ENCODE measurements at regions of chr4 and their contacts with region 1.

Region 1: GRCh38 chr4:98928505-98929340 is at the start of gene EIF4E:
- DNase-seq: peak; percentile 97 to 99
- ATAC-seq: peak; percentile 90 to 92 (median 90)
- H3K4me3 ChIP-seq: peak within 1 kb of the TSS; percentile 96
- H3K27ac ChIP-seq: peak within 1 kb of the TSS; percentile 95
- H3K4me1 ChIP-seq: peaks cover 40% of the 10 kb centered on the region
- H3K27me3 ChIP-seq: no peaks in the 10 kb centered on the region
- CTCF ChIP-seq: no peak
- total RNA-seq, gene EIF4E: 47.7 to 71.2 (median 60.5) TPM

Region 2: DNA sequence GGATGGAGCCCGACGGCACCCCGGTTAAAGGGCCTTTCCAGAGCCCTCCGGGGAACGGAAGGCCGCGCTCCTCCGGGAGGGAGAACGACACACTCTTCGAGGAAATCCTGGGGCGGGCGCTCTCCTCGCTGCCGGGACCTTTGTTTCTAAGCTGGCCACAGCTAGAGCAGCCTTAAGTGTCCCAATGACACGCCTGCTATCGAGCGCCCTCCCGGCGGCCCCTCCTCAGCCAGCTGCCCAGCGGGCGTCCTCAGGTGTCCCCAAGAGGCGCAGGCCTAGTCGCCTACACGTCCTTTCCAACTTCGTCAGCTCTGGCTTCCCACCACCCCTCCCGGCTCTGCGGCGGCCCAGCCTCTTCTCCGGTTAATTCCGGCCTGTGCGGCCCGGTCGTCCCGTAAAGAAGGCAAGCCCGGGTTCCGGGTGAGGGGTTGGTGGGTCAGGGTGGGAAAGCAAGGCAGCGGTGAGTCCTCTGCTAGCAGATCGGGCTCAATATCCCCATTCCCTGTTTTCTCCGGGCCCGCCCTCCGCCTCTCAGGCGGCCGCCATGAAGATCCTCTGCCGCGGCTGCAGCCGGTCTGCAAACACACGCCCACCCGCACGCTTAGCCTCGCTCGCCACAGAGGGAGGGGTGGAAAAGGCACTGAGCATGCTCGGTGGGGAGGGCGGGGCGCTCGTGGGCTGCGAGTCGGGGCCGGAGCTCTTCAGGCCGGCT is 668.0 kb before region 1 on chr4:
- intact Hi-C with region 1: loop called in 1 of 2 experiments (anchors 10 kb)
- DNase-seq: peak; percentile 96 to 98
- ATAC-seq: peak; percentile 94 to 97 (median 96)
- H3K4me3 ChIP-seq: peak overlapping the region; percentile 78
- H3K27ac ChIP-seq: peak overlapping the region; percentile 89
- H3K4me1 ChIP-seq: peaks cover 15% of the 10 kb centered on the region
- H3K27me3 ChIP-seq: no peaks in the 10 kb centered on the region
- CTCF ChIP-seq: no peak

Region 3: GRCh38 chr4:98995183-98996055 is 66.7 kb after region 1 on chr4 and contains the start of gene METAP1:
- intact Hi-C with region 1: loop called in 1 of 2 experiments (anchors 5 kb)
- DNase-seq: peak; percentile 96 to 98
- ATAC-seq: peak; percentile 92 to 94 (median 92)
- H3K4me3 ChIP-seq: peak within 1 kb of the TSS; percentile 98
- H3K27ac ChIP-seq: peak within 1 kb of the TSS; percentile 94
- H3K4me1 ChIP-seq: peaks cover 13% of the 10 kb centered on the region
- H3K27me3 ChIP-seq: no peaks in the 10 kb centered on the region
- CTCF ChIP-seq: peak; percentile 49
- total RNA-seq, gene METAP1: 18.2 to 36.9 (median 30.0) TPM

Region 4: GRCh38 chr4:99054428-99054994 is 125.8 kb after region 1 on chr4:
- intact Hi-C with region 1: loop called (anchors 5 to 10 kb)
- DNase-seq: no peak
- ATAC-seq: no peak
- H3K4me3 ChIP-seq: no peak overlapping the region
- H3K27ac ChIP-seq: no peak overlapping the region
- H3K4me1 ChIP-seq: peaks cover under 1% of the 10 kb centered on the region
- H3K27me3 ChIP-seq: no peaks in the 10 kb centered on the region
- CTCF ChIP-seq: no peak

Region 5: GRCh38 chr4:99088481-99089365 is 160.0 kb after region 1 on chr4 and contains the start of gene ADH5:
- intact Hi-C with region 1: loop called (anchors 5 to 10 kb)
- DNase-seq: peak; percentile 93
- ATAC-seq: peak; percentile 92 to 98 (median 94)
- H3K4me3 ChIP-seq: peak within 1 kb of the TSS; percentile 90
- H3K27ac ChIP-seq: peak within 1 kb of the TSS; percentile 94
- H3K4me1 ChIP-seq: peaks cover 23% of the 10 kb centered on the region
- H3K27me3 ChIP-seq: no peaks in the 10 kb centered on the region
- CTCF ChIP-seq: no peak
- total RNA-seq, gene ADH5: 59.8 to 96.3 (median 70.6) TPM

Region 6: GRCh38 chr4:99324979-99325378 is 396.3 kb after region 1 on chr4:
- intact Hi-C with region 1: loop called in 1 of 2 experiments (anchors 5 kb)
- DNase-seq: peak; percentile 61 to 80
- ATAC-seq: peak; percentile 60 to 90 (median 74)
- H3K4me3 ChIP-seq: no peak overlapping the region
- H3K27ac ChIP-seq: peak overlapping the region; percentile 71
- H3K4me1 ChIP-seq: peaks cover 28% of the 10 kb centered on the region
- H3K27me3 ChIP-seq: no peaks in the 10 kb centered on the region
- CTCF ChIP-seq: no peak